IMR-90 (cell line): ENCODE measurements at regions of chr3 and their contacts with region 1.

Region 1: GRCh38 chr3:129121792-129122411 is at the start of gene RAB43:
- DNase-seq: peak; percentile 56
- ATAC-seq: peak; percentile 78
- H3K4me3 ChIP-seq: peak within 1 kb of the TSS; percentile 62
- H3K27ac ChIP-seq: peak within 1 kb of the TSS; percentile 75
- H3K4me1 ChIP-seq: peaks cover 21% of the 10 kb centered on the region
- H3K27me3 ChIP-seq: no peaks in the 10 kb centered on the region
- CTCF ChIP-seq: no peak
- POLR2A ChIP-seq: no peak
- RAD21 ChIP-seq: no peak
- total RNA-seq, gene RAB43: 9.2 and 9.9 TPM in 2 replicates

Region 2: GRCh38 chr3:129058441-129059200 is 63.3 kb before region 1 on chr3:
- CTCF ChIA-PET with region 1: interaction called, 5 read pairs
- POLR2A ChIA-PET with region 1: no interaction called
- dilution Hi-C with region 1: no loop called
- in situ Hi-C with region 1: no loop called
- intact Hi-C with region 1: loop called (anchors 10 kb)
- DNase-seq: no peak
- ATAC-seq: peak; percentile 57
- H3K4me3 ChIP-seq: no peak overlapping the region
- H3K27ac ChIP-seq: no peak overlapping the region
- H3K4me1 ChIP-seq: peaks cover 2% of the 10 kb centered on the region; the same call in 1 of the 2 replicates
- H3K27me3 ChIP-seq: peaks cover 28% of the 10 kb centered on the region
- CTCF ChIP-seq: no peak
- POLR2A ChIP-seq: no peak
- RAD21 ChIP-seq: no peak

Region 3: GRCh38 chr3:129399145-129399894 is 277.4 kb after region 1 on chr3:
- CTCF ChIA-PET with region 1: no interaction called
- POLR2A ChIA-PET with region 1: no interaction called
- dilution Hi-C with region 1: no loop called
- in situ Hi-C with region 1: no loop called
- intact Hi-C with region 1: no loop called
- DNase-seq: peak; percentile 97
- ATAC-seq: peak; percentile 94
- H3K4me3 ChIP-seq: peak overlapping the region; percentile 80
- H3K27ac ChIP-seq: peak overlapping the region; percentile 89
- H3K4me1 ChIP-seq: peaks cover 1% of the 10 kb centered on the region; the same call in 1 of the 2 replicates
- H3K27me3 ChIP-seq: no peaks in the 10 kb centered on the region
- CTCF ChIP-seq: peak; percentile 81
- POLR2A ChIP-seq: no peak; the same call in none of the 2 replicates
- RAD21 ChIP-seq: peak; percentile 31